Calu3 (cell line): ENCODE measurements at regions of chr5 and their contacts with region 1.

Region 1: GRCh38 chr5:6632917-6633468 is at the starts of genes NSUN2 and SRD5A1:
- DNase-seq: peak; percentile 90
- H3K4me3 Mint-ChIP-seq: peak within 1 kb of the TSS; percentile 88
- H3K27ac Mint-ChIP-seq: peak within 1 kb of the TSS; percentile 99
- H3K4me1 Mint-ChIP-seq: peaks cover 30% of the 10 kb centered on the region
- H3K27me3 Mint-ChIP-seq: no peaks in the 10 kb centered on the region
- CTCF ChIP-seq: no peak
- total RNA-seq, gene NSUN2: 90.7 and 91.2 TPM in 2 replicates
- total RNA-seq, gene SRD5A1: 15.6 and 15.9 TPM in 2 replicates

Region 2: GRCh38 chr5:6674421-6674820 is 41.4 kb after region 1 on chr5:
- CTCF ChIA-PET with region 1: no interaction called
- intact Hi-C with region 1: no loop called
- DNase-seq: no peak
- H3K4me3 Mint-ChIP-seq: no peak overlapping the region
- H3K27ac Mint-ChIP-seq: no peak overlapping the region
- H3K4me1 Mint-ChIP-seq: no peaks in the 10 kb centered on the region
- H3K27me3 Mint-ChIP-seq: no peaks in the 10 kb centered on the region
- CTCF ChIP-seq: no peak

Region 3: DNA sequence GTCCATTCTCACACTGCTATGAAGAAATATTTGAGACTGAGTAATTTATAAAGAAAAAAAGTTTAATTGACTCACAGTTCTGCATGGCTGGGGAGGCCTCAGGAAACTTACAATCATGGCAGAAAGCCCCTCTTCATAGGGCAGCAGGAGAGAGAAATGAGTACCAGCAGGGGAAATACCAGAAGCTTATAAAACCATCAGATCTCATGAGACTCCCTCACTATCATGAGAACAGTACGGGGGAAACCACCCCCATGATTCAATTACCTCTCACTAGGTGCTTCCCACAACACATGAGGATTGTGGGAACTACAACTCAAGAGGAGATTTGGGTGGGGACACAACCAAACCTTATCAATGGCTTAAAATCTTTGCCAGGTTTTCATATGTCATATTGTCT is 59.9 kb after region 1 on chr5:
- CTCF ChIA-PET with region 1: no interaction called
- intact Hi-C with region 1: no loop called
- DNase-seq: no peak
- H3K4me3 Mint-ChIP-seq: no peak overlapping the region
- H3K27ac Mint-ChIP-seq: no peak overlapping the region
- H3K4me1 Mint-ChIP-seq: peaks cover under 1% of the 10 kb centered on the region
- H3K27me3 Mint-ChIP-seq: peaks cover 7% of the 10 kb centered on the region
- CTCF ChIP-seq: no peak

Region 4: DNA sequence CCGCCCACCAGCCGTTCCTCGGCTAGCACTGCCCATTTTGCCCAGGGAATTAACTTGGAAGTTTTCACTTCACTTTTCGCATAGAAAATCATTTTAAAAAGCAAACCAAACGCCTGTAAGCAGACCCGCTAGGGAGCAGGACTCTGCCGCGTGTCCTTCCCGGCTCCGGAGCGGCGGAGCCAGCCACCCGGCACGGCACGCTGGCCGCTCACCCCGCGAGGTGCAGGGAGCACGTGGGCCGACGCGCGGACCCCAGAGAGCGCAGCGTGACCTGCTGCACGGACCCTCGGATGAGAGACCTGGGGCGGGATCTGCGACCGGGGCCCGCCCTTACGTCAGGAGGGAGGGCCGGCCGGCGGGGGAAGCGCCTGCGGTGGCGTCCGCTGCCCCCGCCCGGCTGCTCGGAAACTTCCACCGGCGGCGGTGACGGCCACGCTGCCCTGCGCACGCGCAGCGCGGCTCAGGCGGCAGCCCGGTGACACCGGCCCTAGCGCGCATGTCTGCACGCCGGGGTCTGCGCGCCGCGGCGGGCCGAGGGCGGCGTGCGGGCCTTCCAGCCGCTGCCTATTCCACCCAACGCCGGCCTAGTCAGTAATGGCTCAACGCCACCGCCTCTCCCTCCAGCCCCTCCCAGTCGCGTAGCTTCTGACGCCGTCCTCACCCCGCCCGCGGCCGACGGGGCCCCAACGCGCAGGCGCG is 79.7 kb after region 1 on chr5:
- CTCF ChIA-PET with region 1: interaction called, 3 read pairs
- intact Hi-C with region 1: loop called (anchors 2 kb)
- DNase-seq: peak; percentile 97
- H3K4me3 Mint-ChIP-seq: peak overlapping the region; percentile 79
- H3K27ac Mint-ChIP-seq: peak overlapping the region; percentile 69
- H3K4me1 Mint-ChIP-seq: peaks cover 30% of the 10 kb centered on the region
- H3K27me3 Mint-ChIP-seq: no peaks in the 10 kb centered on the region
- CTCF ChIP-seq: no peak

Region 5: DNA sequence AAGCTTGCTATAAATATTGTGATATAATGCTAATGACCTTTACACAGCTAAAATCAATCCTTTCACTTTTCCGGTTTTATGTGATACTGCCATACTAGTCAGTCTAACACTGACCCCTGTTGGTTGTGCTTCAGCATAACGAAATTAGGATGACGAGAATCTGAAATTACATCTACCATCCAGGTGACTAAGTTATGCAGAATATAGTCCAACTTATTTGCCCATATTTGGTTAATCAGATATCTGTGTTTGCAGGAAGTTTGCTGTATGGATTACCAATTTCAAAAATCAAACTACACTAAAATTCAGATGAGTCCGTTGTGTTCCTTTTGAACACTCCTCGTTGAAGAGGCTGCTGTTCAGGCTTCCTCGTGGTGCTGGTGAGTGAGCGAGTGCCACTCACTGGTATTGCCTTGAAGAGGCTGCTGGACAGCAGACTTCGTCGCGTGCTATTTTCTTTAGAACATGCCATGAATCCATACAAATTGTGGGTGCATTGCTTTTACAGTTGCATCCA is 112.8 kb after region 1 on chr5:
- CTCF ChIA-PET with region 1: interaction called, 7 read pairs
- intact Hi-C with region 1: loop called (anchors 2 kb)
- DNase-seq: peak; percentile 36
- H3K4me3 Mint-ChIP-seq: no peak overlapping the region
- H3K27ac Mint-ChIP-seq: no peak overlapping the region
- H3K4me1 Mint-ChIP-seq: no peaks in the 10 kb centered on the region
- H3K27me3 Mint-ChIP-seq: no peaks in the 10 kb centered on the region
- CTCF ChIP-seq: peak; percentile 49